Activated B cell treated with CpG ODN at 0.5 μM for 24 hours (primary cell): ENCODE measurements at regions of chr1 and their contacts with region 1.

Region 1: DNA sequence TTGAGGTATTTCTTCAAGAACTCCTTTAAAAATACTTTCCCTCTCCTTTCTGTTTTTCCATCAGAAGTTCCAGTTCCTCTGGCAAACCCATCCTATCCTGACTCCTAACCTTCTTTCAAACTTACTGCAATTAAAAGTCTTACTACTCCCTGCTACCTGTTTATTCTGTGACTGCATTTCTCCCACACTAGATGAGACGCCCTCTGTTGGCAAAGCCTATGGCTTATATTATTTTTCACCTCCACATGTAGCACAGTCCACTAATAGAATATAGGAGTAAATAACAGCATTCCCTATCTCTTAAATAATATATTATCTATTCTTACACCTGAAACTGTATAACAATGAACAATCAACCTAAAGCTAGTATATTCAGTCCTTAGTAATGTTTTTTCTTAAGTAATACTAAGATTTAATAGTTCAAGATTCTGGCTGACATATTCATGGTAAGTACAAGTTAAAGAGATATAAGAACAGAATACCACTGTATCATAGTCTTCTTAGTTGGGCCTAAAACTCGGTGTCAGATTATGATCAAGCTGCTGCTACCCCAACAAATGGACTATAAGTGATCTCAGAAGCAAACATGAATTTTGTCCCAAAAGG is 54.8 kb downstream of the RAB3GAP2 start:
- DNase-seq: no peak
- ATAC-seq: no peak
- H3K4me3 Mint-ChIP-seq: no peak overlapping the region
- H3K27ac Mint-ChIP-seq: peak overlapping the region; percentile 0
- H3K4me1 Mint-ChIP-seq: peaks cover 49% of the 10 kb centered on the region
- H3K27me3 Mint-ChIP-seq: no peaks in the 10 kb centered on the region
- CTCF ChIP-seq: no peak

Region 2: GRCh38 chr1:220229771-220230170 is 12.3 kb after region 1 on chr1:
- CTCF ChIA-PET with region 1: interaction called, 10 read pairs
- POLR2A ChIA-PET with region 1: interaction called, 9 read pairs
- intact Hi-C with region 1: loop called (anchors 2 kb)
- DNase-seq: no peak
- ATAC-seq: no peak
- H3K4me3 Mint-ChIP-seq: no peak overlapping the region
- H3K27ac Mint-ChIP-seq: no peak overlapping the region
- H3K4me1 Mint-ChIP-seq: peaks cover 34% of the 10 kb centered on the region
- H3K27me3 Mint-ChIP-seq: no peaks in the 10 kb centered on the region
- CTCF ChIP-seq: no peak

Region 3: DNA sequence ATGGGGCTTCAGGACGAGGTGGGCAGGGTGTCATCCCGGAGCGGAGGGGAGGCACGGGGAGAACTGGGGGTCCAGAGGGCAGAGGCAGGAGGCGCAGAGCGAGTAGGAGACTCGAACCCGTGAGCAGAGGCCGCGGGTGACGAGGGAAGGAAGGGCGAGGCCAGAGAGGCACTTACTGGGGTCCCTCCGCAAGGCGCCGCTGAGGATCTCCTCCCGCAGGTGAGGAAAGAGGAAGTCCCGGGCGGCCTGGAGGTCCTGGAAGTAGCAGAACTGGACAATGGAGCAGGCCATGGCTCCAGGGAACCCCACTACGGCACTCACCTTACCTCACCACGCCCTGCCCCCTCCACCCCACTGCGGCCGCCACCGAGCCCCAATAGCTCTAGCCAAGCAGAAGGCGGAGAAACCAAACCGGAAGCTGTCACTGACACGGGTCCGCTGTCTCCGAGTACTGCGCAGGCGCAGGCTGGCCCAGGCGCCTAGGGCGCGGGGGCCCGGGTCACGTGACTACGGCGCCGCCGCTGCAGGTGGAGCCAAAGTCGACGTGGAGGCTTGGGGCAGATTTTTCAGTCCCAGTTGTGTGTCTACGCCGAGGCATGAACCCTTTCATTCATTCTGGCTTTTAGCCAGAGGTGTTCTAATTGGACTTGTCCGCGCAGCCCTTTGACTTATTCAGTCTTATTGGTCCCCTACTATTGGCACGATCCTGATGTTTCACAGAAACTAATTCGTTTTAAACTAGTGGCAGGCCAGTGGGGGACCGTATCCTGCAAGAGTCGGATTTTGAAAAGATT is 54.8 kb after region 1 on chr1 and contains the start of gene RAB3GAP2:
- CTCF ChIA-PET with region 1: interaction called, 12 read pairs
- POLR2A ChIA-PET with region 1: interaction called, 67 read pairs
- intact Hi-C with region 1: loop called (anchors 1 kb)
- DNase-seq: peak; percentile 94
- ATAC-seq: peak; percentile 91
- H3K4me3 Mint-ChIP-seq: no peak within 1 kb of the TSS
- H3K27ac Mint-ChIP-seq: no peak within 1 kb of the TSS
- H3K4me1 Mint-ChIP-seq: peaks cover 16% of the 10 kb centered on the region
- H3K27me3 Mint-ChIP-seq: peaks cover 7% of the 10 kb centered on the region
- CTCF ChIP-seq: no peak
- total RNA-seq, gene RAB3GAP2: 93.3 and 107 TPM in 2 replicates

Region 4: GRCh38 chr1:220391479-220391878 is 174.0 kb after region 1 on chr1:
- CTCF ChIA-PET with region 1: no interaction called
- POLR2A ChIA-PET with region 1: no interaction called
- intact Hi-C with region 1: no loop called
- DNase-seq: no peak
- ATAC-seq: no peak
- H3K4me3 Mint-ChIP-seq: no peak overlapping the region
- H3K27ac Mint-ChIP-seq: no peak overlapping the region
- H3K4me1 Mint-ChIP-seq: no peaks in the 10 kb centered on the region
- H3K27me3 Mint-ChIP-seq: peaks cover 12% of the 10 kb centered on the region
- CTCF ChIP-seq: no peak

Region 5: GRCh38 chr1:220483700-220484099 is 266.2 kb after region 1 on chr1:
- CTCF ChIA-PET with region 1: no interaction called
- POLR2A ChIA-PET with region 1: no interaction called
- intact Hi-C with region 1: loop called (anchors 5 kb)
- DNase-seq: no peak
- ATAC-seq: no peak
- H3K4me3 Mint-ChIP-seq: no peak overlapping the region
- H3K27ac Mint-ChIP-seq: no peak overlapping the region
- H3K4me1 Mint-ChIP-seq: no peaks in the 10 kb centered on the region
- H3K27me3 Mint-ChIP-seq: peaks cover 5% of the 10 kb centered on the region
- CTCF ChIP-seq: no peak

Region 6: GRCh38 chr1:220733090-220733601 is 515.7 kb after region 1 on chr1:
- CTCF ChIA-PET with region 1: interaction called, 25 read pairs
- POLR2A ChIA-PET with region 1: interaction called, 7 read pairs
- intact Hi-C with region 1: loop called (anchors 1 kb)
- DNase-seq: peak; percentile 67
- ATAC-seq: peak; percentile 95
- H3K4me3 Mint-ChIP-seq: peak overlapping the region; percentile 47
- H3K27ac Mint-ChIP-seq: peak overlapping the region; percentile 30
- H3K4me1 Mint-ChIP-seq: peaks cover 25% of the 10 kb centered on the region
- H3K27me3 Mint-ChIP-seq: no peaks in the 10 kb centered on the region
- CTCF ChIP-seq: peak; percentile 51